Activated T-helper 1 cell treated with anti-CD3 and anti-CD28 coated beads, Interleukin-12 subunit alpha, Interleukin-12 subunit beta, Interleukin-2, Interleukin-4 antibody, amounts not matched to agents 30 ng/mL and 10 ng/mL and 1 ng/mL, durations not matched to agents 14 hours and 24 hours and 36 hours (primary cell): ENCODE measurements at regions of chr19 and their contacts with region 1.

Region 1: GRCh38 chr19:17747205-17748098 is 3.8 kb upstream of the FCHO1 start:
- DNase-seq: peak; percentile 93
- H3K4me3 Mint-ChIP-seq: peak overlapping the region; percentile 97
- H3K27ac Mint-ChIP-seq: peak overlapping the region; percentile 71
- H3K4me1 Mint-ChIP-seq: peaks cover 49% of the 10 kb centered on the region
- H3K27me3 Mint-ChIP-seq: no peaks in the 10 kb centered on the region

Region 2: DNA sequence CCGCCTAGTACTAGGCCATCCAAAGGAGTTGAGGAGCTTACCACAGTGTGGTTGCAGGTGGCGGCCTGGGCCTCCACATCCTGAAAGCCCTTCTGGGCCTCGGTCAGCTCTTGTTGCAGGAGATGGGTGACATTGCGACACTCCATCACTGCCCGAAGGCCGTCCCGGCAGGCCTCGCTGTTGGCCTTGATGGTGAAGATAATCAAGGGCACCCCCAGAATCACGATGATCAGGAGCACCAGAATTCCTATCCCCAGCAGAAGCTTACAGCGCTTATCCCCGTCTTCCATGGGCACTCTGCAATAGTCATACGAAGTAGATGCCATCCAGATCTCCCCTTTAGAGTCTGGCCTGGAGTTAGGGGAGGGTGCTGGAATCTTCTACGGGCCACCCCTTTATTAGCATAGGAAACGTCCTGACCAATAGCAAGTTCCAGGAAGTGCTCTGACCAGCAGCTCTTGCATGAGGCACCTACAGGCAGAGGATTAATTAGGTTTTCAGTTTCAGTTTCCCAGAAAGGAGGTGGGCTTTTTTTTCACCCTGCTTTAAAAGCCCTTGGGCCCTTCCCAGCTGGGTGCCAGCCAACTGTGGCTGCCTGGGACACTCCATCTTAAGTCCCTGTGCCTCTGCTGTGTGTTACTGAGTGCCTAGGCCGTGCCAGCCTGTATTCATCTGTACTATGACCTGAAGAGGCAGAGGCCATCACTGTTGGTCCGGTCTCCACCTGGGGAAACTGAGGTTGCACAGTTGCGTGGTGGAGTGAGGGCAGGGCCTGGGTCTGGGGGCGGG is 342.0 kb before region 1 on chr19 and contains the start of gene BST2:
- intact Hi-C with region 1: loop called (anchors 1 kb)
- DNase-seq: peak; percentile 58
- H3K4me3 Mint-ChIP-seq: peak within 1 kb of the TSS; percentile 85
- H3K27ac Mint-ChIP-seq: peak within 1 kb of the TSS; percentile 89
- H3K4me1 Mint-ChIP-seq: peaks cover 32% of the 10 kb centered on the region
- H3K27me3 Mint-ChIP-seq: no peaks in the 10 kb centered on the region
- total RNA-seq, gene BST2: 146 and 148 TPM in 2 replicates

Region 3: GRCh38 chr19:17539238-17540117 is 208.0 kb before region 1 on chr19:
- intact Hi-C with region 1: loop called (anchors 5 kb)
- DNase-seq: peak; percentile 93
- H3K4me3 Mint-ChIP-seq: peak overlapping the region; percentile 84
- H3K27ac Mint-ChIP-seq: peak overlapping the region; percentile 63
- H3K4me1 Mint-ChIP-seq: peaks cover 11% of the 10 kb centered on the region
- H3K27me3 Mint-ChIP-seq: peaks cover 10% of the 10 kb centered on the region

Region 4: GRCh38 chr19:17605761-17606745 is 141.4 kb before region 1 on chr19:
- intact Hi-C with region 1: loop called (anchors 5 kb)
- DNase-seq: peak; percentile 74
- H3K4me3 Mint-ChIP-seq: peak overlapping the region; percentile 74
- H3K27ac Mint-ChIP-seq: peak overlapping the region; percentile 70
- H3K4me1 Mint-ChIP-seq: peaks cover 8% of the 10 kb centered on the region
- H3K27me3 Mint-ChIP-seq: peaks cover 37% of the 10 kb centered on the region

Region 5: DNA sequence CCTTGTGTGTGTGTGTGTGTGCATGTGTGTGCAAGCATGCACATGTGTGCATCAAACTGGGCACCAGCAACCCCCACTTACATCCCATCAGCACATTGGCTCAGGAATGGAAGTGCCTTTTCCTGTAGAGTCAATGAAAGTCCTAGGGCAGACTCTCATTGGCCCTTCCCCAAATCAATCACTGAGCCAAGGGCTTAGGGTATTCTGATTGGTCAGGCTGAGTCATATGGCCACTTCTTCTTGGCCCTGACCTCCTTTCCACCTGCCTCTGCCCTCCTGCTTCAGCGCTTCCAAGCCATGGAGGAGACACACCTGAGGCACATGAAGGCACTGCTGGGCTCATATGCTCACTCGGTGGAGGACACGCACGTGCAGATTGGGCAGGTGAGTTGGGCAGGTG is 24.7 kb after region 1 on chr19:
- intact Hi-C with region 1: no loop called
- DNase-seq: no peak
- H3K4me3 Mint-ChIP-seq: no peak overlapping the region
- H3K27ac Mint-ChIP-seq: no peak overlapping the region
- H3K4me1 Mint-ChIP-seq: peaks cover 6% of the 10 kb centered on the region
- H3K27me3 Mint-ChIP-seq: no peaks in the 10 kb centered on the region

Region 6: GRCh38 chr19:17784201-17785008 is 37.0 kb after region 1 on chr19:
- intact Hi-C with region 1: loop called (anchors 1 kb)
- DNase-seq: peak; percentile 56
- H3K4me3 Mint-ChIP-seq: no peak overlapping the region
- H3K27ac Mint-ChIP-seq: peak overlapping the region; percentile 63
- H3K4me1 Mint-ChIP-seq: peaks cover 17% of the 10 kb centered on the region
- H3K27me3 Mint-ChIP-seq: no peaks in the 10 kb centered on the region